Dorsolateral prefrontal cortex (tissue), 120 donors: ENCODE measurements at regions of chr2 and their contacts with region 1.

Region 1: DNA sequence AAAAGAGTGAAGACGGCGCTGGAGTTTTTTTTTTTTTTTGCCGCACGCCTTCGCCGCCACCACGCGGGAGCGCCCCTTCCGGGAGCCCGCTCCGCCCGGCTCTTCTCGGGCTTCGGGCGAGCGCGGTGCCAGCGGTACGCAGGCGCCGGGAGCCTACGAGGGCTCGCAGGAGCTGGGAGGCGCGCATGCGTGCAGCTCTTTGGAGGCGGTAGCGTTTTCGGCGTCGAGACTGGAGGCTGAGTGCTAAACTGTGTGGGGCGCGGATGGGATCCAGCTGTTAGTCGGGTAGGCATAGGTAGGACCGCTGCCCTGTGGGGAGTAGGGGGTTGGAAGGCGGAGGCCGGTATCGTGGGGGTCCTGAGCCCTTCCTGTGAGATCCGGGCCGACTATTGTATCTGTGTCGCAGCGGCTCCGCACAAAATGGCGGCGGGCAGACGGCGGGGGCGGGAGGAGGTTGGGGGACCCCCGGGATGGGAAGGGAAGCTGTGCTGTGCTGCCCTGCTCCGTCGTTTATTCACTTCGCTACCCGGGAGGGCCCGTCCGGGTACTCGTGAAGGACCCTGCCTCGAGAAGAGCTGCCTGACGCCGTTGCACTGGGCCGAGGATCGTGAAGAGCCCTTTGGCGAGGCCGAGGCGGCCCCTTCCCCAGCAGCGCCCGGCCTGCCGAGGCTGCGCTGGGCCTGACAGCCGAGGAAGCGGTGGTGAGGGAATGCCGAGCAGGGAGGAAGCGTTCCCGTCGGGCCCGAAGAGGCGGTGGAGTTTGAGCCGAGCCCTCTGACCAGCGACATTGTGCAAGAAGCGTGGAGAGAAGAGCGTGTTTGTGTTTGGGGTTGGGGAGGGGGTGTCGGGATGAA is at the start of gene ZNF638:
- DNase-seq: peak; percentile 77 to 93 (median 87)
- H3K4me3 ChIP-seq: peak within 1 kb of the TSS; percentile 58 to 100 (median 95)
- H3K27ac ChIP-seq: peak within 1 kb of the TSS; percentile 67 to 99 (median 94)
- H3K27me3 ChIP-seq: no peaks in the 10 kb centered on the region
- CTCF ChIP-seq: peak; percentile 61 to 97 (median 82)
- total RNA-seq, gene ZNF638: 180 to 307 (median 230) TPM

Region 2: DNA sequence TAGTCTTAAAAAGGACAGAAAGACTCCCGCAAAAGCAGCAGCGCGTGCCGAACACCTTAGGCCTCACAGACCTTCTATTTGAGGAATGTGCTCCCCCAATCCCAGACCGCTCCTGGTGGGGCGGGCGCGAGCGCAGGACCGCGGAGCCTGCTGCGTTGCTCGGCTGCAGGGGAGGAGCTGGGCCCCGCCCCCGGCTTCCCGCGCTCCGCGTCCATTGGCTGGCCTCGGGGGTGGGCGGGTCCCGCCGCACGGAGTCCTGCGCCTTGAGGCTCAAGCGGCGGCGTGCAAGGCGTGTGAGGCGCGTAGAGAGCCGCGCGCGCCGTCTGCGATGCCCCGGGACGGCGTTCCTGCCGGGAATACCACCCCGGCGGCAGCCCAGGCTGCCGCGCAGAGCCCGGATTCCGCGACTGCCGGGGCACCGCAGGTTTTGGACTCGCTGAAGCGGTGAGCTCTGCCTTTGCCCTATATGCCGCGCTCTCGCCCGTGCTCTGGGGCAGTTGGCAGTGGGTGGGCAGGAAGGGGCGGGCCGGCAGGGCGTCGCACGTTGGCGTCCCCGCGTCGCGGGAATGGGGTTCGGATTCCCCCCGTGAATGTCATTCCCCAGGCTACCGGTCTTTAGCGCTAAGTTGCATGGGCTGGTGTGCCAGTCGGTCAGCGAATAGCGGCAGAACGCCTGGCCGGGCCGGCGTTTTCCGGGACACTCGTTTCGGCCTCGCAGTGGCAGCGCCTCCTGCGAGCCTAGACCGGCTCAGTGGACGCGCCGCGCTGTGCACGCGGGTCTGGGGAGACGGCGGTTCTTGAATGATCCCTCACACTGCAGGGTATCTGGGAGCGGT is 55.3 kb before region 1 on chr2:
- intact Hi-C with region 1: loop called (anchors 2 to 5 kb)
- DNase-seq: peak; percentile 88 to 97 (median 93)
- H3K4me3 ChIP-seq: peak overlapping the region; percentile 43 to 89 (median 75)
- H3K27ac ChIP-seq: peak overlapping the region; percentile 6 to 98 (median 92)
- H3K27me3 ChIP-seq: no peaks in the 10 kb centered on the region
- CTCF ChIP-seq: peak in 27 of 56 donors; percentile 1 to 53 (median 25)

Region 3: DNA sequence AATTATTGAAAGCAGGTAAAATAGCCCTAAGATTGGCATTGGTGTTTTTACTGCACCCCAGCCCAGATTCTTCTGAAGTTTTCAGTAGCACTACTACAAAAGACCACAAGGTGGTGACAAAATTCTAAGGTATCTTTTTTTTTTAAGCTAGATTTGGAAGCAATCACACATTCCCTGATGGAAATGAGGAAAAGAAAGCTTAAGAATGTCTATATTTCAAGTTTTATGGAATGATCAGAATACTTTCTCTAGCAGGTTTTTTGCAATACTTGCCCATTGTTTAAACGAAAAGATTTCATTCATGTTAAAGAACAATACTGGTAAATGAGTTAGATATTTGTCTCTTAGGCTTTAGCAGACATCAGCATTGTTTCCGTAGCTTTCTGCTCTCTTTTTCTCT is 32.3 kb before region 1 on chr2:
- intact Hi-C with region 1: loop called in 1 of 2 experiments (anchors 5 kb)
- DNase-seq: no peak
- H3K4me3 ChIP-seq: no peak overlapping the region
- H3K27ac ChIP-seq: peak overlapping the region in 13 of 59 donors; percentile 7 to 65 (median 33)
- H3K27me3 ChIP-seq: no peaks in the 10 kb centered on the region
- CTCF ChIP-seq: peak; percentile 60 to 90 (median 78)

Region 4: GRCh38 chr2:71385012-71385411 is 53.2 kb after region 1 on chr2:
- intact Hi-C with region 1: loop called in 1 of 2 experiments (anchors 2 kb)
- DNase-seq: no peak
- H3K4me3 ChIP-seq: no peak overlapping the region
- H3K27ac ChIP-seq: peak overlapping the region in 1 of 59 donors; percentile 8
- H3K27me3 ChIP-seq: no peaks in the 10 kb centered on the region
- CTCF ChIP-seq: no peak

Region 5: DNA sequence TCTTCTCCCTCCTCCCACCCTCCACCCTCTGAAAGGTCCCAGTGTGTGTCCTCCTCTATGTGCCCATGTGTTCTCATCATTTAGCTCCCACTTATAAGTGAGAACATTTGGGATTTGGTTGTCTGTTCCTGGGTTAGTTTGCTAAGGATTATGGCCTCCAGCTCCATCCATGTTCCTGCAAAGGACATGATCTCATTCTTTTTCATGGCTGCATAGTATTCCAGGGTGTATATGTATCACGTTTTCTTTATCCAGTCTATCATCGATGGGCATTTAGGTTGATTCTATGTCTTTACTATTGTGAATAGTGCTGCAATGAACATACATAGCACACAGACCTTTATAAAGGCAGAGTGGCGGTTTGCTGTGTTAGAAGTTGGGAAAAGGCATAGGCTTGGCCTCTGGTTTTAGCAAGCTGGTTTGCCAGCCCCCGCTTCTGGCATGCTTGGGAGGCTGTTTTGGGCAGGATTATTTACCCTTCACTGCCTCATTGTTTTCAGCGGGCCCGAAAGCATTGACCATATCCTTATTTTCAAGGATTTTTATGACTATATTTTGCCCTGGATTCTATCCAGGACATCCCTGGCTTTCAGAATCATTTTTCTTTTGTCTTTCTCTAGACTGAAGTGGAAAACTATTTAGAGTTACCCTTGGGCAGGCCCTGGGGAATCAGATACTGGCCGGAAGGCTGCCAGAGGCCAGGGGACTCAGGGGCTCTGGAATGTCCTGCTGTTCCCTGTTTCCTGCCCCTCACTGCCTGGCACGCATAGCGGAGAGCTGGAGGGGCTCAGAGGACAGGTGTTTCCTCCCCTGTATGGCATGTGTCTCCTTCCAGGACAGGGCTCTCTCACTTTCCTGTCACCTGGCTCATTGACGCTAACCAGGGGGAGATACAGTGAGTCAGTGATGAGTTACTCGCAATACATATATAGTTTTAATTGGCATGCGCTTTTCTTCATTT is 160.0 kb after region 1 on chr2:
- intact Hi-C with region 1: no loop called
- DNase-seq: no peak
- H3K4me3 ChIP-seq: no peak overlapping the region
- H3K27ac ChIP-seq: no peak overlapping the region
- H3K27me3 ChIP-seq: no peaks in the 10 kb centered on the region
- CTCF ChIP-seq: no peak